B cell (primary cell): ENCODE measurements at regions of chr4 and their contacts with region 1.

Region 1: GRCh38 chr4:26076000-26076587 is 162.1 kb downstream of the SMIM20 start:
- DNase-seq: peak; percentile 38
- ATAC-seq: peak; percentile 23
- H3K4me3 ChIP-seq: no peak overlapping the region
- H3K4me3 Mint-ChIP-seq: peak overlapping the region; percentile 23
- H3K27ac ChIP-seq: peak overlapping the region; percentile 32 to 44
- H3K27ac Mint-ChIP-seq: peak overlapping the region; percentile 75
- H3K4me1 ChIP-seq: peaks cover 20 to 25% of the 10 kb centered on the region in 2 donors
- H3K4me1 Mint-ChIP-seq: peaks cover 29% of the 10 kb centered on the region
- H3K27me3 ChIP-seq: peaks cover 0 to 2% (median 0%) of the 10 kb centered on the region in 4 experiments
- H3K27me3 Mint-ChIP-seq: peaks cover 5% of the 10 kb centered on the region
- CTCF ChIP-seq: no peak

Region 2: DNA sequence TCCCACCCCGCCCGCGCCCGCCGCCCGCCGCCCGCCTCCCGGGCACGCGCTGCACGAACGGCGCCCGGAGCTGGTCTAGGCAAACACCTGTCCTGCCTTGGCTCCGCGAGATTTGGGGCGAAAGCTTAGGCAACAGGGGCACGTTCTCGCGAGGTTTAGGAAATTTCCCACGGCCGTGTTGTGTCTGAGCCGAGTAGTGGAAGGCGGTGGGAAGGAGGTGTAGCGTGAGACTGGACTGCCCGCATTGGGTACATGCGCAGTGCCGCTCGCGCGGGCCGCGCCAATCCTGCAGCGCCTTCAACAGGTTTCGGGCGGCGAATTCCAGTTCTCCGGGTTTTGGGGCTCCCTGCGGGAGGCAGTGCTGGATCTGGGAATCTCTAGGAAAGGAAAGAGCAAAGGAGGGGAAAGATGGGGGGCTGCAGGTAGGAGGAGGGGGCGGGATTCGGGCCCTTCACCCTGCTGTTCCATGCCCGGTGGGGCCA is 243.4 kb after region 1 on chr4:
- CTCF ChIA-PET with region 1: interaction called, 3 read pairs
- POLR2A ChIA-PET with region 1: no interaction called
- intact Hi-C with region 1: loop called (anchors 2 kb)
- DNase-seq: peak; percentile 97
- ATAC-seq: peak; percentile 73
- H3K4me3 ChIP-seq: peak overlapping the region; percentile 75 to 91 (median 87)
- H3K4me3 Mint-ChIP-seq: peak overlapping the region; percentile 99
- H3K27ac ChIP-seq: peak overlapping the region; percentile 78 to 89
- H3K27ac Mint-ChIP-seq: peak overlapping the region; percentile 99
- H3K4me1 ChIP-seq: peaks cover 13 to 22% of the 10 kb centered on the region in 2 donors
- H3K4me1 Mint-ChIP-seq: peaks cover 27% of the 10 kb centered on the region
- H3K27me3 ChIP-seq: no peaks in the 10 kb centered on the region
- H3K27me3 Mint-ChIP-seq: no peaks in the 10 kb centered on the region
- CTCF ChIP-seq: no peak